Heart right ventricle (tissue), 16 donors: ENCODE measurements at regions of chrX and their contacts with region 1.

Region 1: DNA sequence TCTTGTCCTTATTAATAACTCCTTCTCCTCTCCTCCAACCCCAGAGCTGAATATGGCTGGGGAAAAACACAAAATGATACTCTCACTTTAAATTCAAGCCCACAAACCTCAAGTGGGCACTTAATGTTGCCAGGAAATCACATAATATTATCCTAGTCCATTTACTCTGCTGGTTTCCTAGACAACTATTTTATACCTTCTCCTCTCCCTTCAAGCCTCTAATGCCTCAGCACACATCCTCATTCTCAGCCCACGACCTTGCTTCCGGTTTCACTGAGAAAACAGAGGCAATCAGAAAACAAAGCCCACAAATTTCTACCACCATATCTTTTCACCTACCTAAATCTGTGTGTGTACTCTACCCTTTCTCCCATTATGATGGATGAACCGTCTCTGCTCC is 12.1 kb upstream of the CLCN5 start:
- DNase-seq: no peak
- ATAC-seq: no peak
- H3K4me3 ChIP-seq: no peak overlapping the region
- H3K27ac ChIP-seq: no peak overlapping the region
- H3K4me1 ChIP-seq: no peaks in the 10 kb centered on the region
- H3K27me3 ChIP-seq: peaks cover 0 to 62% (median 0%) of the 10 kb centered on the region in 7 donors
- CTCF ChIP-seq: no peak

Region 2: DNA sequence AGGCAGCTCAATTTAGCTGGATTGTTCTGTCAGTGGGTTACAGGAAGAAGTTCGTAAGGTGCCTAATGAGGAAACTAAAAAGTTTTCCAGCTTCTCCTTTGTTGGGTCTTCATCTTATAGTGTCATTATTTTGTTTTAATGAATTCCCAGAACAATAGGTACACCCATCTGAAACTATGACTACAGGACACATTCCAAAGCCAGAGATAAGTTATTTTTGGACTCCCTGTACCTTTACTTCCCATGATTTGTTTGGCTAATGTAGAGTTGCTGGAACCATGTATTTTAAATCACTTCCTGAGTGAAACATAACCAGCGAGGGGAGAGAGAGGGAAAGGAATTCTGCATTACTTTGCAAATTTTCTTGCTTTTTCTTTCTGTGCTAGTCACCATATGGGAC is 126.1 kb after region 1 on chrX:
- intact Hi-C with region 1: no loop called
- DNase-seq: no peak
- ATAC-seq: peak in 5 of 8 donors; percentile 54 to 78 (median 60)
- H3K4me3 ChIP-seq: peak overlapping the region in 5 of 10 donors; percentile 6 to 27 (median 25)
- H3K27ac ChIP-seq: peak overlapping the region in 5 of 10 donors; percentile 21 to 53 (median 42)
- H3K4me1 ChIP-seq: peaks cover 0 to 18% (median 4%) of the 10 kb centered on the region in 9 donors
- H3K27me3 ChIP-seq: peaks cover 0 to 7% (median 0%) of the 10 kb centered on the region in 7 donors
- CTCF ChIP-seq: no peak

Region 3: DNA sequence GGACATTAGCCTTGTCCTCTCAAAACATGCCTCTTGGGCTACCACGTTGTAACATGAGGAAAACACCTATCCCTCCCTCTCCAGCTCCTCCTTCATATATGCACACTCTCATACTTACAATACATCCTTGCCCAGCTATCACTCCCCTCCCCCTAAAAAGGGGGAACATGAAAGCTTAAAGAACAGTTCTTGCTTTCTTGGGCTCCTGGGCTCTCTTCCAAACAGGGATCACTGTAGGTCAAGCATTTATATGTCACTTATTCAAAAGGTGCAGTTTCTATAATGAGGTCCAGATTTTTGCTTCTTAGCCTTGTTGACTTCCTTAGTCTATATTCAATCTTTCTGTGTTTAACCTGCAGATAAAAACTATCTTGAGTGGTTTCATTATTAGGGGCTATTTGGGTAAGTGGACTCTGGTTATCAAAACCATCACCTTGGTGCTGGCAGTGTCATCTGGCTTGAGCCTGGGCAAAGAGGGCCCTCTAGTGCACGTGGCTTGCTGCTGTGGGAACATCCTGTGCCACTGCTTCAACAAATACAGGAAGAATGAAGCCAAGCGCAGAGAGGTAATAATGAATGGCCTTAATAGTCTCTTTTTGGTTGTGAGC is 171.0 kb after region 1 on chrX:
- intact Hi-C with region 1: loop called (anchors 1 to 10 kb)
- DNase-seq: peak; percentile 13 to 15
- ATAC-seq: peak in 4 of 8 donors; percentile 34 to 73 (median 62)
- H3K4me3 ChIP-seq: no peak overlapping the region
- H3K27ac ChIP-seq: no peak overlapping the region
- H3K4me1 ChIP-seq: no peaks in the 10 kb centered on the region
- H3K27me3 ChIP-seq: peaks cover 0 to 8% (median 0%) of the 10 kb centered on the region in 7 donors
- CTCF ChIP-seq: peak in 7 of 9 donors; percentile 27 to 57 (median 47)

Region 4: DNA sequence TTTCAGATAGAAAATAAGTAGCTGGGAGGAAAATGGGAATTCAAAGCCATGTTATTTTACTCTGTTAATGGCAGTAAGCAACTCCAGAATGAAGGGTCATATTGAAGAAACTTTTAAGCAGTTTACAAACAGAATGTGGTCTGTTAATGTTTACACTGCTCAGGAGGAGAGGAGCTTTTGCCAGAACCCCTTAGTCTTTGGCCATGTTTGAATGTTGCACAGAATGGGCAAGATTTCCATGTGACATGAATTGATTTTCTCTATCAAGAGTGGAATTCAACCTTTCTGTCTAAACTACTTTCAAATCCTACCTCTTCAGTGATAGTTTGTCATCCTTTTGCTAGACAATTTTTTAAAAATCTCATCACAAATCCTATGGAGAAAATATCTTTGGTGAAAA is 676.1 kb after region 1 on chrX:
- intact Hi-C with region 1: loop called in 7 of 10 experiments (anchors 5 to 10 kb)
- DNase-seq: no peak
- ATAC-seq: no peak
- H3K4me3 ChIP-seq: no peak overlapping the region
- H3K27ac ChIP-seq: no peak overlapping the region
- H3K4me1 ChIP-seq: no peaks in the 10 kb centered on the region
- H3K27me3 ChIP-seq: peaks cover 0 to 24% (median 0%) of the 10 kb centered on the region in 7 donors
- CTCF ChIP-seq: no peak